Endothelial cell of umbilical vein (primary cell): ENCODE measurements at regions of chr3 and their contacts with region 1.

Region 1: DNA sequence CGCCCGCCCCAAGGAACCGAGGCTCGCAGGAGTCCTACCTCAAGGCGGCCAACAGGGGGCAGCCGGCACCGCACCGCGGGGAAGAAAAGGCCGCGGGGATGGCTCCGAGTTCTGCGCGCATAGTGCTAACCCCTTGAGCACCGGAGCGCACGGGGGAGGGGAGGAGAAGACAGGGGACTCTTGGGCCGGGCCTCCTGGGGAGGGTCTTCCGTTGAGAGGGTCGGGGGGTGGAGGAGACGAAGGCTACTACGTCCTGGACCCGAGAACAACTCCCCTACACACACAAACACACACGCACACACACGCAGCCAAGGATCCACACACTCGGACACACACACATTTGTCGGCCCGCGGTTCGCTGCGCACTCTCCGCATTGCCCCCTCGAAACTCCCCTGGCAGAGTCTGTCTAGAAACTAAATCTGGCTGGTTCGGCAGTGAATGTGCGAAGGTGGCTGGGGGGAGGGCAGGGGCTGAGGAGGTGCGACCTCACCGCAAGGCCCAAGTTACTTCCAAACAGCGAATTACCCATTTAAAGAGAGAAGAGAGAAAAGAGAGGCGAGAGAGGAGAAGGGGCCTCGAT is 1.8 kb downstream of the WNT5A start:
- DNase-seq: peak; percentile 53
- H3K4me3 ChIP-seq: no peak overlapping the region
- H3K27ac ChIP-seq: no peak overlapping the region
- H3K4me1 ChIP-seq: peaks cover 14% of the 10 kb centered on the region
- H3K27me3 ChIP-seq: peaks cover 77 to 88% of the 10 kb centered on the region in 2 experiments
- CTCF ChIP-seq: peak; percentile 27 to 83
- POLR2A ChIP-seq: no peak

Region 2: GRCh38 chr3:55330355-55330754 is 154.9 kb before region 1 on chr3:
- CTCF ChIA-PET with region 1: no interaction called
- POLR2A ChIA-PET with region 1: no interaction called
- dilution Hi-C with region 1: no loop called
- intact Hi-C with region 1: no loop called
- DNase-seq: no peak
- H3K4me3 ChIP-seq: no peak overlapping the region
- H3K27ac ChIP-seq: no peak overlapping the region
- H3K4me1 ChIP-seq: no peaks in the 10 kb centered on the region
- H3K27me3 ChIP-seq: no peaks in the 10 kb centered on the region
- CTCF ChIP-seq: no peak
- POLR2A ChIP-seq: no peak

Region 3: GRCh38 chr3:55604402-55604801 is 119.1 kb after region 1 on chr3:
- CTCF ChIA-PET with region 1: no interaction called
- POLR2A ChIA-PET with region 1: no interaction called
- dilution Hi-C with region 1: no loop called
- intact Hi-C with region 1: loop called (anchors 5 kb)
- DNase-seq: no peak
- H3K4me3 ChIP-seq: no peak overlapping the region
- H3K27ac ChIP-seq: no peak overlapping the region
- H3K4me1 ChIP-seq: peaks cover 12% of the 10 kb centered on the region
- H3K27me3 ChIP-seq: no peaks in the 10 kb centered on the region
- CTCF ChIP-seq: no peak
- POLR2A ChIP-seq: no peak

Region 4: GRCh38 chr3:55721716-55722484 is 236.6 kb after region 1 on chr3:
- CTCF ChIA-PET with region 1: interaction called, 13 read pairs
- POLR2A ChIA-PET with region 1: no interaction called
- dilution Hi-C with region 1: no loop called
- intact Hi-C with region 1: loop called (anchors 1 kb)
- DNase-seq: no peak
- H3K4me3 ChIP-seq: no peak overlapping the region
- H3K27ac ChIP-seq: no peak overlapping the region
- H3K4me1 ChIP-seq: no peaks in the 10 kb centered on the region
- H3K27me3 ChIP-seq: no peaks in the 10 kb centered on the region
- CTCF ChIP-seq: no peak
- POLR2A ChIP-seq: no peak

Region 5: GRCh38 chr3:55897573-55898224 is 412.4 kb after region 1 on chr3:
- CTCF ChIA-PET with region 1: interaction called, 3 read pairs
- POLR2A ChIA-PET with region 1: no interaction called
- dilution Hi-C with region 1: no loop called
- intact Hi-C with region 1: loop called (anchors 1 kb)
- DNase-seq: peak; percentile 34
- H3K4me3 ChIP-seq: no peak overlapping the region
- H3K27ac ChIP-seq: no peak overlapping the region
- H3K4me1 ChIP-seq: peaks cover 12% of the 10 kb centered on the region
- H3K27me3 ChIP-seq: no peaks in the 10 kb centered on the region
- CTCF ChIP-seq: peak; percentile 10 to 13
- POLR2A ChIP-seq: no peak

Region 6: DNA sequence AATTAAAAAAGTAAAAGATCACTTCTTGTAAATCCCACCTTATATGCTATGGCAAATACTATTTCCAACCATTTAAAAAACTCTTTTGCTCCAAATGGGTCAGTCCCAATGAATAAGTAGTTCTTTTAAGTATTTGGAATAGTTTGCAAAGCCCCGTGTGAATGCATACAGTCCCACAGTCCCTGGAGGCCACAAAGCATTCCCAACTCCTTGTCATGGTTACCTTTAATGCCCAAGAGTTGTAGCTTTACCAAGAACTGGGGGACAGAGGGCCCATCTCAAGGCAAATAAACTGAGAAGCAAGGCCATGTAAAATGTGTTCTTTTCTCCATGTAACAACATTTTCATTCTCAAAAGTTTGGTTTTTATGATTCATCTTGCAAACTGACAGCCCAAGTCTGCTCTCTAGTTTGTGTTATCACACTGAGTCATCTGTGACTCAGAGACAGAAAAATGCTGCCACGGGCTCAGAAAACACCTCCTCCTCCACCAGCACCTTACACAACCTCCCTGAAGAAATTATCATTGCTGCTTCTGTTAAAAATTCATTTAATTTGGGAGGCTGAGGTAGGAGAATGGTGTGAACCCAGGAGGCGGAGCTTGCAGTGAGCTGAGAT is 646.8 kb after region 1 on chr3:
- CTCF ChIA-PET with region 1: no interaction called
- POLR2A ChIA-PET with region 1: no interaction called
- dilution Hi-C with region 1: no loop called
- intact Hi-C with region 1: loop called (anchors 5 kb)
- DNase-seq: peak; percentile 92
- H3K4me3 ChIP-seq: no peak overlapping the region
- H3K27ac ChIP-seq: peak overlapping the region; percentile 48
- H3K4me1 ChIP-seq: peaks cover 26% of the 10 kb centered on the region
- H3K27me3 ChIP-seq: no peaks in the 10 kb centered on the region
- CTCF ChIP-seq: no peak
- POLR2A ChIP-seq: no peak

Region 7: DNA sequence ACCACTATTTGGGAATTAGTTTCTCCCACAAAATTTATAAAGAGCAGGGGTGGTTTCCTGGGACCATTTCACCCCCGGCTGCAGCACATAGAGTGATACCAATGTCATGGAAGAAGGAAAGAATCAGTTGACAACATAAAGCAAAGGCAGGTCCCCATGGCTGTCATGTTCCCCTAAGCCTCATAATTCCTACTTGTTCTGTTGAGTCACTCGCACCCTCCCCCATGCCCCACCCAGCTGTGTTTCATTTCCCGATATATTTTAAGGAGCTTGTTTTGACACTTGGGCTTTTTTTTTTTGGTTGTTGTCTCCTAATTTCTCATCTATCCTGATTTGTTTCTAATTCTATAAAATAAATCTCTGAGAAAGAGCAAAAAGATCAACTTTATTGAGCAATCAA is 958.1 kb after region 1 on chr3:
- CTCF ChIA-PET with region 1: no interaction called
- POLR2A ChIA-PET with region 1: no interaction called
- dilution Hi-C with region 1: no loop called
- intact Hi-C with region 1: loop called (anchors 1 kb)
- DNase-seq: no peak
- H3K4me3 ChIP-seq: no peak overlapping the region
- H3K27ac ChIP-seq: no peak overlapping the region
- H3K4me1 ChIP-seq: no peaks in the 10 kb centered on the region
- H3K27me3 ChIP-seq: no peaks in the 10 kb centered on the region
- CTCF ChIP-seq: no peak
- POLR2A ChIP-seq: no peak